Activated T-helper 1 cell treated with anti-CD3 and anti-CD28 coated beads, Interleukin-12 subunit alpha, Interleukin-12 subunit beta, Interleukin-2, Interleukin-4 antibody, amounts not matched to agents 30 ng/mL and 10 ng/mL and 1 ng/mL, durations not matched to agents 14 hours and 24 hours and 36 hours (primary cell): ENCODE measurements at regions of chr6 and their contacts with region 1.

Region 1: DNA sequence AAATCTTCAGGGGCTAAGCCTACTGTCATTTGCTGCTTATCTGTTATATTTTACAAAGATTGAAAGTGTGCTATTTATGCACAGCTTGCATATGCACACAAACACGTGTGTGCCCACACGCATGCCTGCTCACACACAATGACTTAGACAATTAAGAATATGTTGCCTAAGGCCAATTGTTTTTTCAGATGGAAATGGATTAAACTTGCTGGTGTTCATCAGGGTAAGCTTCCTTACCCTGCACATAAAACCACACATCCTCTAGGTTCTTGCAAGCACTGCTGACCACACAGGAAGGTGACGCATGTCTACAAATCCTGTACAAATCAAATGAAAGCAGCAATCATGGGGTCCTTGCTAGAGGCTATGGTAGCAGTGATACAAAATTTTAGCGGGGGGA is 58.4 kb downstream of the GJA10 start:
- DNase-seq: peak; percentile 54
- H3K4me3 Mint-ChIP-seq: peak overlapping the region; percentile 53
- H3K27ac Mint-ChIP-seq: peak overlapping the region; percentile 61
- H3K4me1 Mint-ChIP-seq: peaks cover 71% of the 10 kb centered on the region
- H3K27me3 Mint-ChIP-seq: no peaks in the 10 kb centered on the region

Region 2: DNA sequence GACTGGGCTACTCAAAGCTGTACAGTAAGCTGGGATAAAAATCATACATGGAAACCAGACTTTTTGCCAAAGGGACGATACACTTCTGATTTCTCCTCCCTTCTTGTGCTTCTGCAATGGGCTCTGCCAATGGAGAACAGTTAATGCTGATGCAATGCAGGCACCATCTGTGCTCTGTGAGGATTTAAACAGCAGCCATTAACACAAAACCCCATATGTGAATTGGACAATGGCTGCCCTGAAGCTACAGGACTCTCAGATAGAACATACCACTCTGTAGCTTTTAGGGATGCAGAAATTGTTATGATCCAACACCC is 13.5 kb after region 1 on chr6:
- intact Hi-C with region 1: loop called (anchors 1 kb)
- DNase-seq: no peak
- H3K4me3 Mint-ChIP-seq: no peak overlapping the region
- H3K27ac Mint-ChIP-seq: peak overlapping the region; percentile 92
- H3K4me1 Mint-ChIP-seq: peaks cover 59% of the 10 kb centered on the region
- H3K27me3 Mint-ChIP-seq: peaks cover 3% of the 10 kb centered on the region

Region 3: DNA sequence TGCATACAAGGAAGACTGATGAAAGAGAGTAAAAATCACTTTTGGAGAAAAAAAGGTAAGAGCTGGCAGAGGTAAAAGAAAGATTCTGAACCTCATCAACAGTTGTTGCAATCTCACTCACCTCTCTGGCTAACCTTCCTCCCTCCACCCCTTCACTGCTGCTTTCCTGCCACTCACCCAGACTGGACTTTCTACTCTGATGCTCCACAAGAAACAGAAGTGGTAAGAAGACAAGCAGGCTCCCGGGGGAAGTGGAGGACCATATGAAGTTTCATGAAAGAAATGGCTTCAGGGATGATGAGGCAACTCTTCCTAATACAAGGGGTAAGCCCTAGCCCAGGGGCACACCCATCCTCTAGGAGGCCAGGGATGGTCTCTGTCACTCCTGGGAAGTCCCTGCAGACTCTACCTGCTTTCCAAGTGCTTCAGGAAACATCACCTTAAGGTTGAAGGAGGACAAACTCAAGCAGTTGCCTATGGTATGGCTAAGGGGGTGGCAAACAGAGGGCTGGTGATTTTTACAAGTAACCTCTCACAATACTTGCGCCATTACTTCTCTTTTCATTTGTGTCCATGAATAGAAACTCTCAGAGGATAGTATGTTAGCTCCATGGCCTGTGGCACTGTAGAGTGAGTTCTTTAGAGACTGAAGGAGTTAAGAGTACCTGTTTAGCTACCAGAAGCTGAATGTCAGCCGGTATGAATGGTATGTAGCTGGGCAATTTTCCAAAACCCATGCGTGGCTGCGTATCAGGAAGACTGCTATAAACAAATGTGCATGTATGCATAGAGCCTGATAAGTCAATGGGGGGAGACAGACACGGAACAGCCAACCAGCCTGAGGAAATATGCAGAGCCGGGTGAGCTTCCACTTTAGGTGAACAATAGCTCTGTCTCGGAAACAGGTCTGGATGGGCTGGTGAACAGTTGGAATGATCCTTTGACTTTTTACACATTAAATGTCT is 231.9 kb after region 1 on chr6:
- intact Hi-C with region 1: loop called (anchors 5 kb)
- DNase-seq: no peak
- H3K4me3 Mint-ChIP-seq: no peak overlapping the region
- H3K27ac Mint-ChIP-seq: no peak overlapping the region
- H3K4me1 Mint-ChIP-seq: peaks cover 55% of the 10 kb centered on the region
- H3K27me3 Mint-ChIP-seq: no peaks in the 10 kb centered on the region